ENCODE measurements at regions of chr12 and their contacts with region 1.

Region 1: GRCh38 chr12:88764781-88765470 is 184.7 kb upstream of the KITLG start:
- DNase-seq: no peak
- H3K4me3 ChIP-seq: no peak overlapping the region
- H3K27ac ChIP-seq: no peak overlapping the region
- H3K4me1 ChIP-seq: peaks cover 0 to 4% of the 10 kb centered on the region in 2 donors
- H3K27me3 ChIP-seq: no peaks in the 10 kb centered on the region
- CTCF ChIP-seq: no peak
- POLR2A ChIP-seq: no peak

Region 2: DNA sequence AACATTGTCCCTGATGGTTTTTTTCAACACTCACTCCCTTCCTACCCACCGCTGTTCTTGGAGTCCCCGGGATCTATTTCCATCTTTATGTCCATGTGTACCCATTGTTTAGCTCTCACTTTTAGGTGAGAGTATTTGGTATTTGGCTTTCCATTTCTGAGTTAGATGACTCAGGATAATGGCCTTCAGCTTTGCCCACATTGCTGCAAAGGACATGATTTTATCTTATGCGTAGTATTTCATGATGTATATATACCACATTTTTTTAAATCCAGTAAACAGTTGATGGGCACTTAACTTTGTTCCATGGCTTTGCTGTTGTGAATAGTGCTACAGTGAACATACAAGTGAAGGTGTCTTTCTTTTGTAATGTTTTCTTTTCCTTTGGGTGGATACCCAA is 61.1 kb before region 1 on chr12:
- intact Hi-C with region 1: no loop called
- DNase-seq: no peak
- H3K4me3 ChIP-seq: no peak overlapping the region
- H3K27ac ChIP-seq: no peak overlapping the region
- H3K4me1 ChIP-seq: no peaks in the 10 kb centered on the region
- H3K27me3 ChIP-seq: no peaks in the 10 kb centered on the region
- CTCF ChIP-seq: no peak
- POLR2A ChIP-seq: no peak

Region 3: DNA sequence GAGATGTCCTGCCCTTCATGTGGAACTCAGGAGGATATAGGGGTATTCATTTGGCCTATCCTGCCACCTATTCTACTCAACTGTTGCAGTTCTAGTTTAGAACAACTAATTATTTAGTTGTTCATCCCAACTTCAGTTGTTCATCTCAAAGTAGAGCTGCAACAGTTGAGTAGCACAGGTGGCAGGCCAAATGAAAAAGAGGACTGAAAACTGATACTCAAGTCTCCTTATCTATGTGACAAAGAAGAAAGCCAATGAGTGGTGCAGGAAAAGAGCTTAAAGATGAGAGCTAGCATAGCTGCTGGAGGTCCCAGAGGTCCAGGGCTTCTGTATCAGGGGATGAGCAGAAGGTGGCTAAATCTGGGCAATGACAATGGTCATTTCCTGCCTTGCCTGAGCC is 35.7 kb before region 1 on chr12:
- intact Hi-C with region 1: loop called (anchors 2 kb)
- DNase-seq: no peak
- H3K4me3 ChIP-seq: no peak overlapping the region
- H3K27ac ChIP-seq: no peak overlapping the region
- H3K4me1 ChIP-seq: no peaks in the 10 kb centered on the region
- H3K27me3 ChIP-seq: no peaks in the 10 kb centered on the region
- CTCF ChIP-seq: no peak
- POLR2A ChIP-seq: no peak

Measured in breast epithelium (tissue), 4 donors.